ENCODE measurements at regions of chr11 and their contacts with region 1.

Region 1: DNA sequence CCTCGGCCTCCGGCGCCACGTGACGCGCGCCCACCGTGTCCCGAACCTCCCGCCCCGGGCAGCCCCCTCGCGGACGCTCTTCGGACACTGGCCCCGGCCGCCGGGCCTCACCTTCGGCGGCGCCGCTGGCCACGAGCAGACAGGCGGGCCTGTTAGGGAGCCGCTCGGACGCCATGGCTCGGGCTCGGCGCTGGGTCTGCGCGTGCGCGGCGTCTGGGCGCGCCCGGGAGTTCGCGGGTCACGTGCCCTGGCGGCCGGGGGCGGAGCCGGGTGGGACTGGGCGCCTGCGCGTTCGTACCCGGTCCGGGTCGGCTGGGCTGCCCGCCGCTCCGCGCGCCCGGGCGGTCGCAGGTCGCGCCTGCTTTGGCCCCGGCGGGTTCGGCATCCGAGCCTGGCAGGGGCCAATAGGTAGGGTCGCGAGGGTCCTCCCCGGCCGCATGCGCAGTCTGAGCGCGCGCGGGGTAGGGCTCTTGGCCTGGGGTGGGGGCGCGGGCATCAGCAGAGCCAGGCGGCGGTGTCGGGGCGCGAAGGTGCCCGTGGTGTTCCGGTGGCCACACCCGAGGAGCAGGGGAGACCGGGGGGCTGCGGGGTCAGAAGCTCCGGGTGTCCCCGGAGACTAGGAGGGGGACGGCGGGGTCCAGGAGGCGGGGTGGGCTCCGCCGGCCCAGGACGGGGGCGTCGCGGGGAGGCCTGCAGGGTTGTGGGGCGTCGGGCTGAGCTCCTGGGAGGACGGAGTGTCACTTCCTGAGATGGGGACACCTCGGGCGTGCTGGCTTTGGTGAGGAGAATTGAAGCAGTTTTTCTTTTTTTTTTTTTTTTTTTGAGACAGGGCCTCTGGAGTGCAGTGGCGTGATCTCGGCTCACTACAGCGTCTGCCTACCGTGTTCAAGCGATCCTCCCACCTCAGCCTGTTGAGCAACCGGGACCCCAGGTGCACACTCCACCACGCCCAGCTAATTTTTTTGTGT is at the start of gene GATD1:
- DNase-seq: peak; percentile 76 to 96 (median 86)
- H3K4me3 ChIP-seq: peak within 1 kb of the TSS; percentile 68 to 98 (median 88)
- H3K27ac ChIP-seq: peak within 1 kb of the TSS in 55 of 59 donors; percentile 20 to 94 (median 82)
- H3K27me3 ChIP-seq: no peaks in the 10 kb centered on the region
- CTCF ChIP-seq: peak in 11 of 56 donors; percentile 5 to 41 (median 20)
- total RNA-seq, gene GATD1: 70.3 to 151 (median 96.8) TPM

Region 2: GRCh38 chr11:554824-555472 is 222.6 kb before region 1 on chr11:
- intact Hi-C with region 1: loop called in 1 of 2 experiments (anchors 10 kb)
- DNase-seq: peak in 2 of 10 donors; percentile 62 to 73
- H3K4me3 ChIP-seq: peak overlapping the region in 38 of 59 donors; percentile 11 to 54 (median 34)
- H3K27ac ChIP-seq: no peak overlapping the region
- H3K27me3 ChIP-seq: peaks cover 0 to 81% (median 56%) of the 10 kb centered on the region in 45 donors
- CTCF ChIP-seq: peak; percentile 12 to 67 (median 50)

Measured in dorsolateral prefrontal cortex (tissue), 120 donors.